H1 (cell line): ENCODE measurements at regions of chr1 and their contacts with region 1.

Region 1: DNA sequence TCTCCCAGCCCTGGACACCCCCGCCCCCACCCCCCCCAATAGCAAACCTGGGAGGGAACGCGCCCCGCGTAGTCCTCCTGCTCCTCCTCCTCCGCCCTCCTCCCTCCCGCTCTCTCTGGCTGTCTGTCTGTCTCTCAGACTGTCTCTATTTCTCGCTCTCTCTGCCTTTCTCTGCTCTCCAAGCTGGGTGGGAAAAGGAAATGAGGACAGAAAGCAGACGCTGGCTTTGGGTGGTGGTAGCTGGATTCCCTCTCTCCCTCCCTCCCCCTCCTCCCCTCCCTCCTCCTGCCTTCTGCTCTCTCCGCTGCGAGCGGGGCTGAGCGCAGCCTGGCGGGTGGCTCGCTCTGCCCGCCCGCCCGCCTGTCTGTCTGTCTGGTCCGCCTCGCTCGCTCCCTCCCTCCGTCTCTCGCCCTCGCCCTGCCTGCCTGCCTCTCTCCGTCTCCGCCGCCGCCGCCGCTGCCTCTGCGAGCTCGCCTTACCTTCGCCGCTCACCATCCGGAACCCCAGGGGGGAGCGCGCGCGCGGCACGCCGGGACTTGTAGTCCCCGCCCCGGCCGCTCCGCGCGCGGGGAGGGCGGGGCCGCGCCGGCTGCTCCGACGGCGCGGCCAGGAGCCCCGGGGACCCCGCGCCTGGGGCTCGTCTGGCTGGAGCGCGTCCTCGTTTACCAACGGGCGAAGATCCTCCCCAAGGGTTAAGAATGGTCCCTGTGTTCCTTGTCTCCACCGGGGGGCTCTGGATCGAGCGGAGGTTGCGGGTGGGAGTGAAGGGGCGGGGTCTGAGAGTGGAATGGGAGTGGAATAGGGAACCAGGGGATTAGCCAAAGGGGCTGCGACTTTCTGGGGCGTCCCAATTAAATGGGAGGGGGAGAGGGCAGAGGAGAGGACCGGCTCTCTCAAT is at the start of gene AHDC1:
- DNase-seq: peak in 1 of 2 experiments; percentile 97
- H3K4me3 ChIP-seq: peak within 1 kb of the TSS; percentile 57 to 82 (median 68)
- H3K27ac ChIP-seq: no peak within 1 kb of the TSS
- H3K4me1 ChIP-seq: peaks cover 30 to 53% (median 40%) of the 10 kb centered on the region in 4 experiments
- H3K27me3 ChIP-seq: no peaks in the 10 kb centered on the region
- CTCF ChIP-seq: no peak; a peak in 1 of 4 replicates
- EP300 ChIP-seq: no peak
- POLR2A ChIP-seq: peak in 1 of 2 experiments; percentile 68; a peak in 2 of 3 replicates
- RAD21 ChIP-seq: no peak; a peak in 1 of 4 replicates
- total RNA-seq, gene AHDC1: 35.1 and 39.4 TPM in 2 replicates

Region 2: GRCh38 chr1:27306892-27307761 is 296.8 kb before region 1 on chr1:
- CTCF ChIA-PET with region 1: interaction called, 86 read pairs
- POLR2A ChIA-PET with region 1: no interaction called
- DNase-seq: peak in 1 of 2 experiments; percentile 76
- H3K4me3 ChIP-seq: peak overlapping the region in 2 of 4 experiments; percentile 23 to 39; a peak in 4 of 8 replicates
- H3K27ac ChIP-seq: peak overlapping the region; percentile 57; the same call in 1 of the 2 replicates
- H3K4me1 ChIP-seq: peaks cover 11 to 15% (median 13%) of the 10 kb centered on the region in 4 experiments
- H3K27me3 ChIP-seq: no peaks in the 10 kb centered on the region
- CTCF ChIP-seq: peak; percentile 33 to 57 (median 41)
- EP300 ChIP-seq: no peak
- POLR2A ChIP-seq: 0 out of 3 replicates have a peak, but pooled peaks of 1 of the 2 experiments have one; percentile 28
- RAD21 ChIP-seq: 0 out of 4 replicates have a peak, but pooled peaks of 1 of the 2 experiments have one; percentile 12

Region 3: DNA sequence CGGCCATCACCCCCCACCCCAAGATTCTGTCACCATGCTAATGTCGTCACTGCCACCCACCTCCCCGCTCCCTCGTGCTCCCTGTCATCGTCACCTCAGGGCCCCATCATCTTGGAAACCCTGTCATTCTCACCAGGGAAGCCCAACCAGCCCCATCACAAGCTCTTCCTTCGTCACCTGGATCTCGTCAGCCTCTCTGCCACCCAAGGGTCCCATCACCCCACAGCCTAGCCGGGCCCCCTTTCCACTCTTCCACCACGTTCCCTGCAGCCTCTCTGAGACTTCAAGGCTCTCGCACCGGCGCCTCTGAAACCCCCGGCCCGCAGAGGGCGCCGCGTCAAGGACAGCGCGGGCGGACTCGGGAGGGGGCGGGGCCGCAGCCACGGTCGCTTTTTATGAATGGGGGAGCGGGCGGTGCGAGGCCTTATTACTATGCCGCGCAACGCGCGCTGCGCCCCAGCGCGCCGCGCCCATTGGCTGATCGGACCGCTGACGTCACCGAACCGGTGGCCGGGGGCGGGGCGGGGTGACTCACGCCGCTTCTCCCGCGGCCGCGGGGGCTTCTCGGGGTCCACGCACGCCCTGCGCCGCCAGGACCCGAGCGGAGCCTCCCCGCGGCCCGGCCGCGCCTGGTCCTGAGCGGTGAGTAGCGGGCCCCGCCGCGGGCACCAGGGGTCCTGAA is 211.7 kb before region 1 on chr1 and contains the start of gene GPR3:
- CTCF ChIA-PET with region 1: interaction called, 105 read pairs
- POLR2A ChIA-PET with region 1: interaction called, 4 read pairs
- DNase-seq: peak; percentile 82 to 97
- H3K4me3 ChIP-seq: peak within 1 kb of the TSS; percentile 61 to 82 (median 70)
- H3K27ac ChIP-seq: peak within 1 kb of the TSS; percentile 45; the same call in 1 of the 2 replicates
- H3K4me1 ChIP-seq: peaks cover 2 to 19% (median 12%) of the 10 kb centered on the region in 4 experiments
- H3K27me3 ChIP-seq: no peaks in the 10 kb centered on the region
- CTCF ChIP-seq: peak in 2 of 3 experiments; percentile 55 to 60; a peak in 3 of 4 replicates
- EP300 ChIP-seq: no peak
- POLR2A ChIP-seq: no peak
- RAD21 ChIP-seq: peak; percentile 16 to 36; a peak in 3 of 4 replicates
- total RNA-seq, gene GPR3: 9.4 and 9.9 TPM in 2 replicates

Region 4: GRCh38 chr1:27496604-27497155 is 107.2 kb before region 1 on chr1:
- CTCF ChIA-PET with region 1: interaction called, 31 read pairs
- POLR2A ChIA-PET with region 1: interaction called, 4 read pairs
- DNase-seq: peak in 1 of 2 experiments; percentile 76
- H3K4me3 ChIP-seq: peak overlapping the region in 2 of 4 experiments; percentile 7 to 36; a peak in 3 of 8 replicates
- H3K27ac ChIP-seq: peak overlapping the region; percentile 59; the same call in 1 of the 2 replicates
- H3K4me1 ChIP-seq: peaks cover 3 to 11% (median 6%) of the 10 kb centered on the region in 4 experiments; a peak in 6 of 7 replicates
- H3K27me3 ChIP-seq: no peaks in the 10 kb centered on the region
- CTCF ChIP-seq: peak; percentile 51 to 83 (median 69)
- EP300 ChIP-seq: peak in 1 of 2 experiments; percentile 69; a peak in 1 of 3 replicates
- POLR2A ChIP-seq: no peak
- RAD21 ChIP-seq: peak; percentile 61 to 62

Region 5: DNA sequence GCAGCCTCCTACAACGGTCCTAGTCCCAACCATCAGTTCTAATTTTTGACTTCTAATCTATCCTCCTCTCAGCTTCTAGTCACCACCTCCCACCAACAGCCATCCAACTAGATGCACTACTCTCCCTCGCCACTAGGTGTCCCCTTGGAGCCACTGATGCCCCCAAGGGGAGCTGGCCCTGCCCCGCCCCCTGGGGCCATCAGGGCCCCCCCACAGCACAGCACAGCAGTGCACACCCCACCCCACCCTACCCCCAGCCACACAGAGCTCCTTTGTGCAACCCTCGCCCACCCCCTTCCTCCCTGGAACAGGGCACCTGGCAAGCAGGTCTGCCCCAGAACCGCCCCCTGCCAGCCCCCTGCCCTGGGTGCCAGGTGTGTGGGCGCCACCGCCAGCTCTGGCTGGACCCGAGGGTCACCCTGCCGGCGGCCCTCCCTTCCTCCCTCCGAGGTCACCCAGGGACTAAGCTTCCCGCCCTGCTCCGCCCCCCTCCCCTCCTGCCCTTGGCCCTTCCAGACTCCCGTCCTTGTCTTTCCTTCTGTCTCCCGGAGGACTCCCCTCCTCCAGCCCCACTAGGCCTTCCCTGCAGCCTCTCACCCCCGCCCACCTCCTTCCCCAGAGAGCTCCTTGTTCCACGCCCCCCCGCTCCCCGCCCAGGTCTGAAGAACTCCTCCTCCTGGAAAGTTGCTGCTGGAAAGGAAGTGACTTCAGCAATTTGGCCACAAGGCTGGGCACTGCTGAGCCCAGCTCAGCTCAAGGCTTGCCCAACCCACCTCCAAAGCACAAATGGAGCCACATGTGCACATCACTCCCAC is 46.9 kb before region 1 on chr1:
- CTCF ChIA-PET with region 1: interaction called, 1,807 read pairs
- POLR2A ChIA-PET with region 1: interaction called, 33 read pairs
- DNase-seq: peak; percentile 87 to 88
- H3K4me3 ChIP-seq: peak overlapping the region in 2 of 4 experiments; percentile 1 to 42; a peak in 2 of 8 replicates
- H3K27ac ChIP-seq: no peak overlapping the region
- H3K4me1 ChIP-seq: peaks cover 13 to 42% (median 19%) of the 10 kb centered on the region in 4 experiments
- H3K27me3 ChIP-seq: no peaks in the 10 kb centered on the region; a peak in 1 of 7 replicates
- CTCF ChIP-seq: peak in 2 of 3 experiments; percentile 69 to 75; a peak in 3 of 4 replicates
- EP300 ChIP-seq: no peak
- POLR2A ChIP-seq: no peak
- RAD21 ChIP-seq: peak; percentile 73 to 79

Region 6: GRCh38 chr1:27643701-27644625 is 40.0 kb after region 1 on chr1:
- CTCF ChIA-PET with region 1: interaction called, 47 read pairs
- POLR2A ChIA-PET with region 1: interaction called, 3 read pairs
- DNase-seq: peak in 1 of 2 experiments; percentile 83
- H3K4me3 ChIP-seq: no peak overlapping the region
- H3K27ac ChIP-seq: no peak overlapping the region
- H3K4me1 ChIP-seq: peaks cover 0 to 5% (median 1%) of the 10 kb centered on the region in 4 experiments; a peak in 4 of 7 replicates
- H3K27me3 ChIP-seq: no peaks in the 10 kb centered on the region
- CTCF ChIP-seq: peak; percentile 72 to 92 (median 80)
- EP300 ChIP-seq: no peak
- POLR2A ChIP-seq: no peak
- RAD21 ChIP-seq: peak; percentile 57 to 68

Region 7: DNA sequence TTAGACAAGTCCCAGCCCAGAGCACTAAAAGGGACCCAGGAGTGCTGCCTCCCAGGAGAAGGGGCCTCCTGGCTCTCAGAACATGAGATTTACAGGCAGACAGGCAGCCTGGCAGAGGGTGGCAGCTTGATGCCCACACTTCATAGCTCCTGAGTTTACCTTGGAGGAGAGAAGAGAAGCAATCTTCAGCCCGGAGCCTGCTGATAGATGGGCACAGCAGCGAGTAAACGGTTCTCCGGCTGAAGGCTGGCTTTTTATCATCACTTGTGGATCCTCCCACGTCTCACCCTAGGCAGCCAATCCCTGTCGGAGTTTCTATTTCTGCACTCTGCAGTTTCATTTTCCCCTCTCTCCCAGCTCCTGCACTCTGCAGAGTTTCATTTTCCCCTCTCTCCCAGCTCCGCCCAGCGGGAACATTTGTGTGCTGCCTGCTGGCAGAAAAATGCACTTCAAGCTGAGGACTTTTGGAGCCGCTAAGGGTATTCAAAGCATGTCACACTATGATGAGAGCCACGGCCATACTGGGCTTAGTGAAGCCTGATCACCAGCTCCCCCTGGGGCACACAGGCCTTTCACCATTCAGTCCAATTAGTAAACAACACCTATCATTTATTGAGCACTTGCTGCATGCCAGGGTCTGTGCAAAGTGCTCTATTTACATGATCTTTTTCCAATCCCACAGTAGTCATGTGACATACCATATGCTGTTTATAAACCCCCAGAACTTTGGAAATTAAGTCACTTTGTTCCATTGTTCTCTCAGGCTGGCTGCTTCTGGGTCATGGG is 68.2 kb after region 1 on chr1 and contains the start of gene IFI6:
- CTCF ChIA-PET with region 1: interaction called, 472 read pairs
- POLR2A ChIA-PET with region 1: interaction called, 4 read pairs
- DNase-seq: peak in 1 of 2 experiments; percentile 72
- H3K4me3 ChIP-seq: peak within 1 kb of the TSS; percentile 2 to 51 (median 28); a peak in 5 of 8 replicates
- H3K27ac ChIP-seq: no peak within 1 kb of the TSS
- H3K4me1 ChIP-seq: peaks cover 2 to 11% (median 7%) of the 10 kb centered on the region in 4 experiments; a peak in 5 of 7 replicates
- H3K27me3 ChIP-seq: peaks cover 0 to 7% (median 4%) of the 10 kb centered on the region in 4 experiments; a peak in 2 of 7 replicates
- CTCF ChIP-seq: peak in 2 of 3 experiments; percentile 15 to 43; a peak in 2 of 4 replicates
- EP300 ChIP-seq: no peak
- POLR2A ChIP-seq: no peak
- RAD21 ChIP-seq: peak in 1 of 2 experiments; percentile 37; a peak in 2 of 4 replicates
- total RNA-seq, gene IFI6: 4.9 and 6.1 TPM in 2 replicates

Region 8: GRCh38 chr1:27959400-27960217 is 355.7 kb after region 1 on chr1 and contains the start of gene XKR8:
- CTCF ChIA-PET with region 1: no interaction called
- POLR2A ChIA-PET with region 1: no interaction called
- DNase-seq: peak; percentile 70 to 92
- H3K4me3 ChIP-seq: peak within 1 kb of the TSS; percentile 70 to 80 (median 72)
- H3K27ac ChIP-seq: peak within 1 kb of the TSS; percentile 84
- H3K4me1 ChIP-seq: peaks cover 0 to 11% (median 8%) of the 10 kb centered on the region in 4 experiments; a peak in 6 of 7 replicates
- H3K27me3 ChIP-seq: no peaks in the 10 kb centered on the region
- CTCF ChIP-seq: peak in 1 of 3 experiments; percentile 77; a peak in 2 of 4 replicates
- EP300 ChIP-seq: no peak
- POLR2A ChIP-seq: peak; percentile 37 to 78
- RAD21 ChIP-seq: no peak
- total RNA-seq, gene XKR8: 13.8 and 14.2 TPM in 2 replicates